ENCODE measurements at regions of chr10 and their contacts with region 1.

Region 1: GRCh38 chr10:128540781-128541761 is 414.8 kb upstream of the MKI67 start:
- DNase-seq: no peak
- H3K4me3 ChIP-seq: no peak overlapping the region
- H3K27ac ChIP-seq: no peak overlapping the region
- H3K4me1 ChIP-seq: no peaks in the 10 kb centered on the region
- H3K27me3 ChIP-seq: peaks cover 2% of the 10 kb centered on the region
- CTCF ChIP-seq: peak in 1 of 2 donors; percentile 38

Region 2: GRCh38 chr10:128660726-128661125 is 119.7 kb after region 1 on chr10:
- CTCF ChIA-PET with region 1: no interaction called
- dilution Hi-C with region 1: no loop called
- in situ Hi-C with region 1: no loop called
- intact Hi-C with region 1: loop called (anchors 2 kb)
- DNase-seq: peak; percentile 39
- H3K4me3 ChIP-seq: no peak overlapping the region
- H3K27ac ChIP-seq: no peak overlapping the region
- H3K4me1 ChIP-seq: no peaks in the 10 kb centered on the region
- H3K27me3 ChIP-seq: peaks cover 2% of the 10 kb centered on the region
- CTCF ChIP-seq: peak; percentile 47 to 69